GM12878 (cell line): ENCODE measurements at regions of chr18 and their contacts with region 1.

Region 1: GRCh38 chr18:58768293-58768974 is 96.2 kb upstream of the ZNF532 start:
- DNase-seq: no peak
- ATAC-seq: peak; percentile 98
- H3K4me3 ChIP-seq: no peak overlapping the region
- H3K27ac ChIP-seq: no peak overlapping the region
- H3K4me1 ChIP-seq: peaks cover 6% of the 10 kb centered on the region; the same call in 1 of the 2 replicates
- H3K27me3 ChIP-seq: no peaks in the 10 kb centered on the region; a peak in 2 of 4 replicates
- CTCF ChIP-seq: peak; percentile 80 to 93 (median 90)
- EP300 ChIP-seq: no peak
- POLR2A ChIP-seq: no peak
- RAD21 ChIP-seq: peak; percentile 81

Region 2: DNA sequence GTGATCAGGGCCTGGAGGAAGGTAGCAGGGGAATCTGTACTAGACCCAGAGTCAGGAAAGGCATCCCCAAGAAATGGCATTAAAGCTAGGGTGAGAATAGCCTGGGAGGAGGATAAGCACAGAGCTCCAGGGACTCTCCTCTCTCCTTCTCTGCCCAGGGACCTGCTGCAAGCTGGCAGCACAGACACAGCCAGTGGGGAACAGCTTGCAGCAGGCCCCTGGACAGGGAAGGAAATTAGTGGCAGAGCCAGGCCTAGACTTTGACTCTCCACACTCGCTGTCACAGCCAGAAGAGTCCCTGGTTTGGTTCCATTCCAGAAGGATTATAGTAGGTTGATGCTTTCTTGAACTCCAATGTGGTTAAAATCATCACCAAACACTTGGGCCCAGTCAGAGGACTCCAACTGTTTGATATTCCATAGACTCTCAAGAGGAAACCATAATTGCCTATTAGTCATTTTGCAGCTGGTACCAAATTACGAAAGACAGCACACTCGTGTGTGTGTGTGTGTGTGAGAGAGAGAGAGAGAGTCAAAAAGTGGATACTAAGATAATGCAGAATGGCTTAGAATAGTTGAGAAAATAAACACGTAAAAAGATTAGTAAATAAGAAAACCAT is 869.8 kb before region 1 on chr18:
- CTCF ChIA-PET with region 1: no interaction called
- POLR2A ChIA-PET with region 1: no interaction called
- RAD21 ChIA-PET with region 1: no interaction called
- SMC1A ChIA-PET with region 1: no interaction called
- in situ Hi-C with region 1: no loop called
- intact Hi-C with region 1: loop called (anchors 10 kb)
- DNase-seq: no peak
- ATAC-seq: no peak
- H3K4me3 ChIP-seq: no peak overlapping the region
- H3K27ac ChIP-seq: no peak overlapping the region
- H3K4me1 ChIP-seq: no peaks in the 10 kb centered on the region
- H3K27me3 ChIP-seq: peaks cover 0 to 1% of the 10 kb centered on the region in 2 experiments; a peak in 2 of 4 replicates
- CTCF ChIP-seq: no peak
- EP300 ChIP-seq: no peak
- POLR2A ChIP-seq: no peak
- RAD21 ChIP-seq: no peak

Region 3: DNA sequence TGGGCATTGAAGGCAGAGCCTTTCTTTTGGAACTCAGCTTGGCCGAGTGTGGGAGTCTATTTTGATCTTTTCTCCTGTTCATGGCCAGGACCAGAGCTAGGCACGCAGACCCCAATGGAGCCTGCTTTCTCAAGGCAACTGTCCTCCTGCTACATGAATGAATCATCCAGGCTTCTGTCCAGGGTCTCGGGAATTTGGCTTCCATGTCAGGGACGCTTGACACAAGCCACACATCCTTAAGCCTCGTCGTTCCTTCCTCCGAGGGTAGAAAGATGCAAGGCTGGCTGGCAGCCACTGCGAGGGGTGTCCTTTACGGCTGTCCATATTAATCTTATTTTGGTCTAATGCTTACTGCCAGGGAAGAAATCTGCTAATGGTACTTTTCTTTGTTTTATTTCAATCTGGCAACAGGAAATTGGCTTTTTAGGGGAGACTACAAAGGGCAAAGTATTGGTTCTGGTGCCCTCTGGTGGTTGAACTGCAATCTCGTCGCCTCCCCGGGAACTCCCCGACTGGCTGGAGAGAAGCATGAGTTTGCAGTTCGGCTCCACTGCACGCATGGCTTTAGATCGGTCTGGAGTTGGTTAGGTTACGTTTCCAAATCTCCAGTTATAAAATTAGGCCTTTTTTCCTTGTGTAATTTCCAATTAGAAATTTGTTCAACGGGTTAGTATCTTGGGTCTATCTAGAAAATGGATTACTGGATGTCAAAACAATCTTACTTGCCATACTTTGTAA is 274.7 kb before region 1 on chr18:
- CTCF ChIA-PET with region 1: interaction called, 93 read pairs
- POLR2A ChIA-PET with region 1: no interaction called
- RAD21 ChIA-PET with region 1: interaction called, 38 read pairs
- SMC1A ChIA-PET with region 1: interaction called, 57 read pairs
- in situ Hi-C with region 1: no loop called
- intact Hi-C with region 1: loop called (anchors 1 kb)
- DNase-seq: peak; percentile 28
- ATAC-seq: peak; percentile 94
- H3K4me3 ChIP-seq: no peak overlapping the region
- H3K27ac ChIP-seq: no peak overlapping the region
- H3K4me1 ChIP-seq: peaks cover 13% of the 10 kb centered on the region
- H3K27me3 ChIP-seq: no peaks in the 10 kb centered on the region
- CTCF ChIP-seq: peak; percentile 75 to 90 (median 85)
- EP300 ChIP-seq: no peak
- POLR2A ChIP-seq: no peak
- RAD21 ChIP-seq: peak; percentile 81

Region 4: DNA sequence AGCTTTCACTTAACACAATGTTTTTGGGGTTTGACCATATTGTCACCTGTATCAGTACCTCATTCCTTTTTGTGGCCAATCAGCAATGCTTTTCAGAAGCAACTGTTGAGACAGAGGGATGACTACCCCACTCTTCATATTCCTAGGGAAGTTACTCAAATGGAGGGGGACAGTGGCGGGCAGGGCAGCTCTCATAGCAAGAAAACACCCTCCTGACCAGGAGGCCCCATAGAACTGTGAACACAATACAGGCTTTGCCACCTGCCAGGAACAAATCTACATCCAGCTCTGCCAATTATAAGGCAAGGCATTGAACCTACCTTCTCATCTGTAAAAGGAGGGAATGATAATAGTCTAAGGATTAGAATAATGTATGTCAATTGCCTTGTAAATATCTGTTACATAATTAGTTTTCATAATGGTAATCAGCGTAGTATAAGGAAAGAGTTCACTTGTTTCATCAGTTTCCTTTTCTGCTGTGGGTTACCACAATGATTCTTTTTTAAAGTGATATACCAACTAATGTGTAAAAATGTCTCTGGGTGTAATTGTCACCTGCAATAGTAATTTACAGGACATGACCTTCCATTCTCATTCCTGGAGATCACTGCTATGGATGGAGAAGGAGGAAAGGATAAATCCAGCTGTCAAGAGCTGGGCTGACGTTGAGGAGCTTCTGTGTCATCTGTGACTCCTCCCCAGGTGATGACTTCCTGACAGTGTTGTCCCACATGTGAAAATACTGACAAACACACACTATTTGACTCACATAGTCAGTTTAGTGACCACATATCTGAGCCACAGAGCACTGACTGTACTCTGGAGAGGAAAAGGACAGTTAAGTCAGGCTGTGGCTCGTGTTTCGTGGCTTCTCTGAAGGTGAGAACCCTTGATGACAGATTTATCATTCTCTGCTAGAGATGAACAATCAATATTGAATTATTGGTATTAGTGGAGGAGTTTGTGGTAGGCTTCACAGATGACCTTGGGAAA is 153.0 kb before region 1 on chr18:
- CTCF ChIA-PET with region 1: interaction called, 10 read pairs
- POLR2A ChIA-PET with region 1: no interaction called
- RAD21 ChIA-PET with region 1: interaction called, 7 read pairs
- SMC1A ChIA-PET with region 1: interaction called, 9 read pairs
- in situ Hi-C with region 1: no loop called
- intact Hi-C with region 1: no loop called
- DNase-seq: peak; percentile 88
- ATAC-seq: peak; percentile 92
- H3K4me3 ChIP-seq: no peak overlapping the region; the same call in 1 of the 2 replicates
- H3K27ac ChIP-seq: peak overlapping the region; percentile 70
- H3K4me1 ChIP-seq: peaks cover 22% of the 10 kb centered on the region
- H3K27me3 ChIP-seq: no peaks in the 10 kb centered on the region
- CTCF ChIP-seq: no peak
- EP300 ChIP-seq: peak; percentile 54 to 74; a peak in 3 of 4 replicates
- POLR2A ChIP-seq: no peak
- RAD21 ChIP-seq: peak; percentile 21; the same call in 1 of the 2 replicates

Region 5: GRCh38 chr18:59056706-59057492 is 288.5 kb after region 1 on chr18:
- CTCF ChIA-PET with region 1: interaction called, 46 read pairs
- POLR2A ChIA-PET with region 1: interaction called, 7 read pairs
- RAD21 ChIA-PET with region 1: interaction called, 6 read pairs
- SMC1A ChIA-PET with region 1: interaction called, 5 read pairs
- in situ Hi-C with region 1: no loop called
- intact Hi-C with region 1: loop called (anchors 1 kb)
- DNase-seq: no peak
- ATAC-seq: peak; percentile 98
- H3K4me3 ChIP-seq: no peak overlapping the region
- H3K27ac ChIP-seq: no peak overlapping the region
- H3K4me1 ChIP-seq: no peaks in the 10 kb centered on the region; the same call in 1 of the 2 replicates
- H3K27me3 ChIP-seq: no peaks in the 10 kb centered on the region; a peak in 1 of 4 replicates
- CTCF ChIP-seq: peak; percentile 81 to 92 (median 91)
- EP300 ChIP-seq: no peak
- POLR2A ChIP-seq: no peak
- RAD21 ChIP-seq: peak; percentile 96

Region 6: DNA sequence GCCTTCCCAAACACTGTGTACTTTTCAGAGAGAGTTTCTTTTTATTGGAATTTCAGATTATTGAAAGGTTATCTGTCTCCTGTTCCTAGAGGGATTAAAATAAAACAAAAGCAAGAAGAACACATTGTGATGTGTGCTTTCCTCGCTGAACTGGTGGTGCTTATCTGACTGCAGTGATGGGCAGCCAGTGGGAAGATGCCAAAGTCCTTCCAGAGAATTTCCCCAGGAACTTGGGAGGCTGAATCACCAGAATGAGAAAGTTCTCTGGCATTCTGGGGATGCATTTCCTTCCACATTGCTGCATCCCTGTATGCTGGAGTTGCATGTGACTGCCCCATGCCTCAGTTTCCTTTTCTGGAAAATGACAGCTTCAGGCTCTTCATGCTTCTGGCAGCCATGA is 317.4 kb after region 1 on chr18:
- CTCF ChIA-PET with region 1: interaction called, 17 read pairs
- POLR2A ChIA-PET with region 1: no interaction called
- RAD21 ChIA-PET with region 1: interaction called, 6 read pairs
- SMC1A ChIA-PET with region 1: no interaction called
- in situ Hi-C with region 1: no loop called
- intact Hi-C with region 1: no loop called
- DNase-seq: no peak
- ATAC-seq: no peak
- H3K4me3 ChIP-seq: no peak overlapping the region
- H3K27ac ChIP-seq: no peak overlapping the region
- H3K4me1 ChIP-seq: peaks cover 4% of the 10 kb centered on the region
- H3K27me3 ChIP-seq: peaks cover 0 to 3% of the 10 kb centered on the region in 2 experiments; a peak in 1 of 4 replicates
- CTCF ChIP-seq: no peak
- EP300 ChIP-seq: no peak
- POLR2A ChIP-seq: no peak
- RAD21 ChIP-seq: no peak